Activated B cell treated with CpG ODN at 0.5 μM for 24 hours (primary cell): ENCODE measurements at regions of chr12 and their contacts with region 1.

Region 1: GRCh38 chr12:64796208-64796845 is 28.1 kb upstream of the TBC1D30 start:
- DNase-seq: no peak
- ATAC-seq: peak; percentile 88
- H3K4me3 Mint-ChIP-seq: no peak overlapping the region
- H3K27ac Mint-ChIP-seq: no peak overlapping the region
- H3K4me1 Mint-ChIP-seq: no peaks in the 10 kb centered on the region
- H3K27me3 Mint-ChIP-seq: peaks cover 15% of the 10 kb centered on the region
- CTCF ChIP-seq: peak; percentile 32

Region 2: DNA sequence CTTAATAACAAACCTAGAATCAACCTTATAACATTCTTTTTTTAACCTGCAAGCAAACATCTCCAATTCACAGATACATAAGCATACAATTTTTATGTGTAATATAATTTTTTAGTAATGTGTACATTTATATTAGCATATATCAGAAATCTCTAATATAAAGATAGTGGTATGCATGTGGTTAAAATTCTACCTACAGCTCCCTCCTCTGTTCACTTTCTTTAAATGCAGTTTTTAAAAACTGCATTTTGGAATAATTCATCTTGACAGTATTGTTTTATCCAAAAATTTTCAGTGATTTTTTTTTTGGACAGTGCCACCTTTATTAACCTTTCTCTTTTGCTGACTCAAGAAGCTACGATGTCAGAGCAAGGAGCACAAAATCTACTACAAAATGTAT is 1029.8 kb before region 1 on chr12:
- CTCF ChIA-PET with region 1: no interaction called
- POLR2A ChIA-PET with region 1: no interaction called
- intact Hi-C with region 1: no loop called
- DNase-seq: no peak
- ATAC-seq: no peak
- H3K4me3 Mint-ChIP-seq: no peak overlapping the region
- H3K27ac Mint-ChIP-seq: no peak overlapping the region
- H3K4me1 Mint-ChIP-seq: no peaks in the 10 kb centered on the region
- H3K27me3 Mint-ChIP-seq: peaks cover 3% of the 10 kb centered on the region
- CTCF ChIP-seq: no peak

Region 3: GRCh38 chr12:64876388-64877071 is 80.2 kb after region 1 on chr12:
- CTCF ChIA-PET with region 1: no interaction called
- POLR2A ChIA-PET with region 1: no interaction called
- intact Hi-C with region 1: no loop called
- DNase-seq: no peak
- ATAC-seq: no peak
- H3K4me3 Mint-ChIP-seq: no peak overlapping the region
- H3K27ac Mint-ChIP-seq: no peak overlapping the region
- H3K4me1 Mint-ChIP-seq: no peaks in the 10 kb centered on the region
- H3K27me3 Mint-ChIP-seq: no peaks in the 10 kb centered on the region
- CTCF ChIP-seq: no peak

Region 4: GRCh38 chr12:66107451-66107915 is 1311.2 kb after region 1 on chr12:
- CTCF ChIA-PET with region 1: no interaction called
- POLR2A ChIA-PET with region 1: no interaction called
- intact Hi-C with region 1: loop called (anchors 1 kb)
- DNase-seq: no peak
- ATAC-seq: peak; percentile 85
- H3K4me3 Mint-ChIP-seq: no peak overlapping the region
- H3K27ac Mint-ChIP-seq: no peak overlapping the region
- H3K4me1 Mint-ChIP-seq: peaks cover 3% of the 10 kb centered on the region
- H3K27me3 Mint-ChIP-seq: peaks cover 12% of the 10 kb centered on the region
- CTCF ChIP-seq: peak; percentile 71

Region 5: GRCh38 chr12:66235626-66236281 is 1439.4 kb after region 1 on chr12:
- CTCF ChIA-PET with region 1: no interaction called
- POLR2A ChIA-PET with region 1: no interaction called
- intact Hi-C with region 1: no loop called
- DNase-seq: no peak
- ATAC-seq: no peak
- H3K4me3 Mint-ChIP-seq: peak overlapping the region; percentile 70
- H3K27ac Mint-ChIP-seq: no peak overlapping the region
- H3K4me1 Mint-ChIP-seq: peaks cover 31% of the 10 kb centered on the region
- H3K27me3 Mint-ChIP-seq: peaks cover under 1% of the 10 kb centered on the region
- CTCF ChIP-seq: no peak